ENCODE measurements at regions of chrX and their contacts with region 1.

Region 1: GRCh38 chrX:136767104-136767941 is 13.4 kb downstream of the ARHGEF6 start:
- DNase-seq: peak; percentile 64
- ATAC-seq: peak; percentile 74
- H3K4me3 Mint-ChIP-seq: peak overlapping the region; percentile 79
- H3K27ac Mint-ChIP-seq: peak overlapping the region; percentile 84
- H3K4me1 Mint-ChIP-seq: peaks cover 55% of the 10 kb centered on the region
- H3K27me3 Mint-ChIP-seq: no peaks in the 10 kb centered on the region

Region 2: DNA sequence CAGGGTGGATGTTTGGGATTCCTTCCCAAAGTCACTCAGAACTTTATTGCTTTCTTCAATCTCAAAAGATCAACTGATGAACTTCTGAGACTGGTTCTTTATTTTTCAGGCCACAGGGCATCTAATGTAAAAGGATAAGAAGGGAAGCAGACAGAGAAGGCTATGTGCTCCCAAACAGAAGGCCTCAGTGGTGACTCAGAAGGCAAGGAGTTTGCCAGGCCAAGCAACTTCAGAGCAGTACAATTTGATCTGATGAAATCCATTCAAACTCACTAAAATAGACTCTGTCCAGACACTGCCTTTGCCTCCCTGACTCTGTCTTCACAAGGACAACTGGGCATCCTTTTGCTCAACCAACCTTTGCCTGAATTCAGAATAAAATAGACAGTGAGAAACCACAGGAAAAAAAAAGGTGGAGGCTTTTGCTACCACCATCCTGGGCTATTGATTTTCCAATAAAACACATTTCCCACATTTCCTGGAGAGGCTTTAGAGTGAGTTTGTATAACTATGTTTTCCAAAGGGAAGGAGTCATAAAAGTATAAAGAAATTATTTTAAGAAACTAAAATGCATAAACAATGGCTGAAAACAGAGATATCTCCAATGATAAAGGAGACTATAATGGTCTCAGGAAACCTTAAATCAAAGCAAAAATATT is 41.7 kb before region 1 on chrX:
- POLR2A ChIA-PET with region 1: no interaction called
- DNase-seq: no peak
- ATAC-seq: no peak
- H3K4me3 Mint-ChIP-seq: no peak overlapping the region
- H3K27ac Mint-ChIP-seq: no peak overlapping the region
- H3K4me1 Mint-ChIP-seq: peaks cover 11% of the 10 kb centered on the region
- H3K27me3 Mint-ChIP-seq: no peaks in the 10 kb centered on the region

Region 3: DNA sequence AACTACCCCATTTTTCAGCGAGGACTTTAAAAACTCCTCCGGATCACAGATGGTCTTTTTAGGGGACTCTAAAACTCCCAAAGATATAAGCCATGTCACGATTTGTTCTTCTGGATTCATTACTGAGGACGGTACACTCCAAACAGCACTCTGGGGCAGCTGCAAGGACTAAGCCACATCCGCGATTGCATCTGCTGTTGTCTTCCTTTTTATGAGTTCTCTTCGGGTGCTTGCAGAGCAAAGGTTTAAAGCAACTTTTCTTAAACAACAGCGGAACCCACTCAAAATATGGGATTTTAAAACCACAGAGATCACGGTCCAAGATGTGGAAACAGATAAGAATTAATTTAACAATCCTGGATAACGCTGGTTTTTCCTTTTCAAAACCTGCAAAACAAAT is 13.4 kb after region 1 on chrX and contains the start of gene ARHGEF6:
- POLR2A ChIA-PET with region 1: interaction called, 26 read pairs
- DNase-seq: no peak
- ATAC-seq: peak; percentile 76
- H3K4me3 Mint-ChIP-seq: peak within 1 kb of the TSS; percentile 78
- H3K27ac Mint-ChIP-seq: peak within 1 kb of the TSS; percentile 94
- H3K4me1 Mint-ChIP-seq: peaks cover 45% of the 10 kb centered on the region
- H3K27me3 Mint-ChIP-seq: no peaks in the 10 kb centered on the region
- total RNA-seq, gene ARHGEF6: 85.0 to 87.1 TPM